ENCODE measurements at regions of chr12 and their contacts with region 1.

Region 1: DNA sequence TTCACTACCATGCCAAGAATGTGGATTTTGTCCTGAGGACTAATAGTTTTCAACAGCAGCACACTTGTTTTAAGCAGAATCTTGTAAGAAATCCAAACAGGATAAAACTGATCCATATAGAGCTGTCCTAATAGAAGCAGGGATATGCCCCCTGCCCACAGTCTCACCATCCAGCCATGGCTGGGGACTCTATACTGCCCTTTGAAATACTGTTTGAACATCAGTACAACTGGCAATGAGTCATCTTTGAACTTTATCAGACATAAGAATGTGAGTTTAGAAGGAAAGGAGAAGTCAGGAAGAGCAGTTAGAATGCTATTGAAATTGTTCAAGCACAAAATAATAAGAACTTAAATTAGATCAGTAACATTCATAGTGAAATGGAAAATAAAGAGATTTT is 3.8 kb upstream of the C12orf42 start:
- DNase-seq: no peak
- ATAC-seq: no peak
- H3K4me3 ChIP-seq: no peak overlapping the region
- H3K4me3 Mint-ChIP-seq: no peak overlapping the region
- H3K27ac ChIP-seq: no peak overlapping the region
- H3K27ac Mint-ChIP-seq: no peak overlapping the region
- H3K4me1 ChIP-seq: peaks cover 0 to 14% of the 10 kb centered on the region in 2 experiments
- H3K4me1 Mint-ChIP-seq: peaks cover 10 to 15% (median 12%) of the 10 kb centered on the region in 3 donors
- H3K27me3 ChIP-seq: peaks cover 0 to 9% of the 10 kb centered on the region in 2 experiments
- H3K27me3 Mint-ChIP-seq: peaks cover 2 to 16% of the 10 kb centered on the region in 2 donors

Region 2: GRCh38 chr12:103639983-103640382 is 140.4 kb after region 1 on chr12:
- CTCF ChIA-PET with region 1: no interaction called
- POLR2A ChIA-PET with region 1: interaction called in 1 of 2 experiments, 12 read pairs
- DNase-seq: no peak
- ATAC-seq: no peak
- H3K4me3 ChIP-seq: no peak overlapping the region
- H3K4me3 Mint-ChIP-seq: no peak overlapping the region
- H3K27ac ChIP-seq: no peak overlapping the region
- H3K27ac Mint-ChIP-seq: no peak overlapping the region
- H3K4me1 ChIP-seq: no peaks in the 10 kb centered on the region
- H3K4me1 Mint-ChIP-seq: no peaks in the 10 kb centered on the region
- H3K27me3 ChIP-seq: peaks cover 0 to 10% of the 10 kb centered on the region in 2 experiments
- H3K27me3 Mint-ChIP-seq: peaks cover 3 to 11% of the 10 kb centered on the region in 2 donors

Region 3: DNA sequence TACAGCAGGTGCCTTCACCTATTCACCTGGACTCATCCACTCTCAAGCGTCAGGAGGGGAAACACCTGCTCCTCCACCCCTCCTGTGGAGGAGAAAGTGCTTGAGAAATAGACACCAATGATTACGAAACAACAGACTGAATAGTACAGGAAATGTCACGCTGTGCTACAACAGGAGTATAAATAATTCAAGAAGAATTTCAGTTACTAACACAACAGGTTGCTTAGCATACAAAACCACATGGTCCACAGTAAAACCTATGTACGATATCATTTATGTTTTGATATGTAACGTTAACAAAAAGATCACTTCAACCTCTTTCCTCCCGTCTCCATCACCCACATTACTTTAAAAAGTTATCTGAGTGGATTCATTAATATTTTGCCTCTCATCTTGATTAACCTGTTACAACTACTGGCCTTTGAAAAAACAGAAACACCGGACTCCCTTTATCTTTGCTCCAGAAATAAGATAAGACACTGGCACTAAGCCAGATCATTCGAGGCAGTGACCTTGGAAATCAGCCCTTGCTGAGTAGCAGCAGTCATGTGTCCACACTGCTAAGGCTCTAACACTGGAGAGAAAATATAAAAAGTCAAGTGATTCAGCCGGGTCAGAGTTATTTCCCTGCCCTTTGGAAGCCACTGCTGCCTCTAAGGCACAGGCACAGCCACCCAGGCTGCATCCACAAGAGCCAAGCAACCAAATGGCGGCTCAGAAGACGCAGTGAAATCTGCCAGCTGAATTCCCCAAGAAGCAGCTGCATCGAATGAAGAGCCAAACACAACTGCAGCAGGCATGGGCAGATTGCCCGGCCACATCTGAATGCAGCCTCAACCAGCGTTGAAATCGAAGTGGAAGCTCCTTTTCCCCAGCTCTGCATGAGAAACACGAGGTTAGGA is 300.6 kb after region 1 on chr12:
- CTCF ChIA-PET with region 1: no interaction called
- POLR2A ChIA-PET with region 1: no interaction called
- DNase-seq: no peak
- ATAC-seq: no peak
- H3K4me3 ChIP-seq: no peak overlapping the region
- H3K4me3 Mint-ChIP-seq: no peak overlapping the region
- H3K27ac ChIP-seq: no peak overlapping the region
- H3K27ac Mint-ChIP-seq: no peak overlapping the region
- H3K4me1 ChIP-seq: no peaks in the 10 kb centered on the region
- H3K4me1 Mint-ChIP-seq: no peaks in the 10 kb centered on the region
- H3K27me3 ChIP-seq: no peaks in the 10 kb centered on the region
- H3K27me3 Mint-ChIP-seq: no peaks in the 10 kb centered on the region

Measured in T-cell (primary cell).